ENCODE measurements at regions of chr1 and their contacts with region 1.

Region 1: GRCh38 chr1:150558761-150559645 is 9.8 kb downstream of the ADAMTSL4 start:
- DNase-seq: no peak
- H3K4me3 ChIP-seq: no peak overlapping the region
- H3K27ac ChIP-seq: peak overlapping the region in 2 of 3 donors; percentile 22 to 100
- H3K4me1 ChIP-seq: peaks cover 36 to 43% of the 10 kb centered on the region in 2 donors
- H3K27me3 ChIP-seq: no peaks in the 10 kb centered on the region
- CTCF ChIP-seq: no peak
- POLR2A ChIP-seq: no peak

Region 2: GRCh38 chr1:150363426-150364230 is 195.4 kb before region 1 on chr1 and contains the start of gene RPRD2:
- intact Hi-C with region 1: no loop called
- DNase-seq: peak; percentile 100
- H3K4me3 ChIP-seq: peak within 1 kb of the TSS; percentile 66 to 88 (median 73)
- H3K27ac ChIP-seq: peak within 1 kb of the TSS; percentile 93 to 97 (median 96)
- H3K4me1 ChIP-seq: peaks cover 10 to 18% of the 10 kb centered on the region in 2 donors
- H3K27me3 ChIP-seq: no peaks in the 10 kb centered on the region
- CTCF ChIP-seq: peak in 1 of 6 experiments; percentile 20
- POLR2A ChIP-seq: peak in 1 of 2 donors; percentile 81
- total RNA-seq, gene RPRD2: 26.1 to 39.9 (median 31.6) TPM

Region 3: DNA sequence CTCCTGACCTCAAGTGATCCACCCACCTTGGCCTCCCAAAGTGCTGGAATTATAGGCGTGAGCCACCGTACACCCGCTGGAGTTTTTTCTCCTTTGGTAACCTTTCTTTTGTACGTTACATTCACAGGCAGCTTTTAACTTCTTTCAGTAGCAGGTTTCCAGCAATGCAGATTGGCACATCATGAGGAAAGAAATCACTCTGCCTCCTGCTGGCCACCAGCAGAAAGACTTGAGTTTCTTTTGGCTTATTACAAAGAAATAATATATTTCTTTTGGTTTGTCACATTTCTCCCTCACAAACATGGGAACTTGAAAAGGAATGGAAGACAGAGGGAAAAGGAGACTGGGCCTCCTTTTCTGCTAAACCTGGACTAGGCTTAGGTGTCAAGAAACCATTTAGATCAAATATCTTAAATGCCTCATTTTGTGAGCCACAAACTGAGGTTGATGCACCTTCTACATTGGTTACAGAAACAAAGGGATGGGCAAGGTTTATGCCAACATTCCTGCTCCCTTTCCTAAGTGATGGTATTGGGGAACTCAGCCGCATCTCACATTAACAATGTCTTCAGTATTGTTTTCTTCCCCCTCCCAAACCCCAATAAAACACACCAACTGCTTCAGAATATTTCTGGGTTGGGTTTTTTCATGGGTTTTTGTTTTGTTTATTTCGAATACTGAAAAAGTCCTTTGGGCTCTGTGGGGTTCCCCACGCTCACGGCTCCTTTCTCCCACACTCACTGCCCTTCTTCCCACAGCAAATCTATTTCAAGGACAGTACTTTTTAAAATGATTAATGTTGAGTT is 62.7 kb after region 1 on chr1:
- intact Hi-C with region 1: loop called (anchors 5 kb)
- DNase-seq: peak; percentile 40 to 45
- H3K4me3 ChIP-seq: no peak overlapping the region
- H3K27ac ChIP-seq: peak overlapping the region; percentile 22 to 73 (median 70)
- H3K4me1 ChIP-seq: peaks cover 22 to 40% of the 10 kb centered on the region in 2 donors
- H3K27me3 ChIP-seq: no peaks in the 10 kb centered on the region
- CTCF ChIP-seq: peak; percentile 31 to 68 (median 60)
- POLR2A ChIP-seq: no peak